HepG2 (cell line): ENCODE measurements at regions of chr1 and their contacts with region 1.

Region 1: GRCh38 chr1:219317762-219318353 is 144.2 kb downstream of the LYPLAL1 start:
- DNase-seq: peak; percentile 83
- ATAC-seq: peak; percentile 100
- H3K4me3 ChIP-seq: no peak overlapping the region
- H3K27ac ChIP-seq: peak overlapping the region; percentile 21
- H3K4me1 ChIP-seq: peaks cover 39% of the 10 kb centered on the region
- H3K27me3 ChIP-seq: no peaks in the 10 kb centered on the region
- CTCF ChIP-seq: peak; percentile 93
- EP300 ChIP-seq: 0 out of 4 replicates have a peak, but pooled peaks of 1 of the 2 experiments have one; percentile 25
- POLR2A ChIP-seq: no peak
- RAD21 ChIP-seq: peak; percentile 89

Region 2: GRCh38 chr1:218996362-218996761 is 321.5 kb before region 1 on chr1:
- CTCF ChIA-PET with region 1: no interaction called
- POLR2A ChIA-PET with region 1: no interaction called
- in situ Hi-C with region 1: no loop called
- intact Hi-C with region 1: loop called (anchors 10 kb)
- DNase-seq: no peak
- ATAC-seq: no peak
- H3K4me3 ChIP-seq: no peak overlapping the region
- H3K27ac ChIP-seq: no peak overlapping the region
- H3K4me1 ChIP-seq: no peaks in the 10 kb centered on the region
- H3K27me3 ChIP-seq: no peaks in the 10 kb centered on the region
- CTCF ChIP-seq: no peak
- EP300 ChIP-seq: no peak
- POLR2A ChIP-seq: no peak
- RAD21 ChIP-seq: no peak

Region 3: DNA sequence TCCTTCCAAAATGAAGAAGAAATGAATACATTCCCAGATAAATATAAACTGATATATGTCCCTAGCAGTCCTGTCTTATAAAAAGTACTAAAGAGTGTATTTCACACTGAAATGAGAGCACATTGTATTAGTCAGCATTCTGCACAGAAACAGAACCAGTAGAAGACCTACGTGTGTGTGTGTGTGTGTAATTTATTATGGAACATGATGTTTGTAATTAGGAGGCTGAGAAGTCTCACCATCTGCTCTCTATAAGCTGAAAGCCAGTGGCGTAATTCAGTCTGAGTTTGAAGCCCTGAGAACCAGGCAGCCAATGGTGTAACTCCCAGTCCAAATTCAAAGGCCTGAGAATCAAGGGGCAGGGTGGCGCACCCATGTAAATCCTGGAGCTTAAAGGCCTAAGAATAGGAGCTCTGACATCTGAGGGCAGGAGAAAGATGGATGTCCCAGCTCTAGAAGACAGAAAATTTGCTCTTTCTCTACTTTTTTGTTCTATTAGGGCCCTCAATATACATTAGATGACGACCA is 290.6 kb before region 1 on chr1:
- CTCF ChIA-PET with region 1: no interaction called
- POLR2A ChIA-PET with region 1: no interaction called
- in situ Hi-C with region 1: no loop called
- intact Hi-C with region 1: no loop called
- DNase-seq: no peak
- ATAC-seq: no peak
- H3K4me3 ChIP-seq: no peak overlapping the region
- H3K27ac ChIP-seq: no peak overlapping the region
- H3K4me1 ChIP-seq: no peaks in the 10 kb centered on the region
- H3K27me3 ChIP-seq: no peaks in the 10 kb centered on the region
- CTCF ChIP-seq: no peak
- EP300 ChIP-seq: no peak
- POLR2A ChIP-seq: no peak
- RAD21 ChIP-seq: no peak

Region 4: DNA sequence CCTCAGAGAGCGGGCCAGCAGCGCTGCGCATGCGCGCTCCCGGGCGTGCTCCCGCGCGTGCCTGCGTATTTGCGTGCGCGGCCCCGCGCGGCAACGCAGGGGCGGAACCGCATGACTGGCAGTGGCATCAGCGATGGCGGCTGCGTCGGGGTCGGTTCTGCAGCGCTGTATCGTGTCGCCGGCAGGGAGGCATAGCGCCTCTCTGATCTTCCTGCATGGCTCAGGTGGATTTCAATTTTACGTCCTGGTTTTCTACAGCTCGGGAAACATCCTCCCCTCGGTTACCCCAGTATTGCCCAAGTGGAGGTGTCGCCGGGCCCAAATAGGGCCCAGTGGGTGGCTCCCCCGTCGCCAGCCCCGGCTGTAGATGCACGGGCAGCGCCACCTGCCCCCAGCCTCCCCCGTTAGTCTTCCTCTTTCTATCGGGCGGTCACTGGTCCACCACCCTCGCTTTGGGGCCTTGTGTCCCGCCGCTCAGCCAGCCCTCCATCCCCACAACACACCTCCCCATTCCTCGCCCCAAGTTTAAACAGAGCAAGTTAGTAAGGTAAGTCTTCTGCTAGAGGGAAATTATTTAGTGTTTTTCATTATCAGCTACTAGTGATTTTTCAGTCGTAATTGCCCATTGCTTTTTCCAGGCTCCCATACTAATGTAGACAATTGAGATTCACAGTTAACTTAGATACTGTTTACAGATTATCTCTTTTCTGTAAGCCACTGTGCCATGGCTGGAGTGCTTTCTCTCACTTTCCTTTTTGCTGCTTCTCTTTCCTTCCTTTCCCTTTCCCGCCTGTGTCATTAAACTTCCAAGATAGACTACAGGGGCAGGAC is 143.9 kb before region 1 on chr1 and contains the start of gene LYPLAL1:
- CTCF ChIA-PET with region 1: no interaction called
- POLR2A ChIA-PET with region 1: interaction called, 8 read pairs
- in situ Hi-C with region 1: loop called (anchors 10 kb)
- intact Hi-C with region 1: loop called (anchors 10 kb)
- DNase-seq: peak; percentile 74
- ATAC-seq: peak; percentile 95
- H3K4me3 ChIP-seq: peak within 1 kb of the TSS; percentile 79 to 88 (median 84)
- H3K27ac ChIP-seq: peak within 1 kb of the TSS; percentile 81
- H3K4me1 ChIP-seq: peaks cover 71% of the 10 kb centered on the region
- H3K27me3 ChIP-seq: no peaks in the 10 kb centered on the region; a peak in 1 of 5 replicates
- CTCF ChIP-seq: peak; percentile 39
- EP300 ChIP-seq: no peak
- POLR2A ChIP-seq: peak; percentile 91 to 97
- RAD21 ChIP-seq: no peak
- total RNA-seq, gene LYPLAL1: 29.1 and 31.6 TPM in 2 replicates

Region 5: GRCh38 chr1:219209578-219209977 is 108.3 kb before region 1 on chr1:
- CTCF ChIA-PET with region 1: interaction called, 18 read pairs
- POLR2A ChIA-PET with region 1: no interaction called
- in situ Hi-C with region 1: loop called (anchors 10 kb)
- intact Hi-C with region 1: loop called (anchors 1 kb)
- DNase-seq: no peak
- ATAC-seq: no peak
- H3K4me3 ChIP-seq: no peak overlapping the region
- H3K27ac ChIP-seq: no peak overlapping the region
- H3K4me1 ChIP-seq: peaks cover 24% of the 10 kb centered on the region
- H3K27me3 ChIP-seq: no peaks in the 10 kb centered on the region
- CTCF ChIP-seq: no peak
- EP300 ChIP-seq: no peak
- POLR2A ChIP-seq: no peak
- RAD21 ChIP-seq: no peak

Region 6: GRCh38 chr1:219385786-219386427 is 68.0 kb after region 1 on chr1:
- CTCF ChIA-PET with region 1: no interaction called
- POLR2A ChIA-PET with region 1: interaction called, 4 read pairs
- in situ Hi-C with region 1: no loop called
- intact Hi-C with region 1: loop called (anchors 2 kb)
- DNase-seq: peak; percentile 69
- ATAC-seq: peak; percentile 98
- H3K4me3 ChIP-seq: no peak overlapping the region
- H3K27ac ChIP-seq: no peak overlapping the region
- H3K4me1 ChIP-seq: peaks cover 32% of the 10 kb centered on the region
- H3K27me3 ChIP-seq: no peaks in the 10 kb centered on the region
- CTCF ChIP-seq: peak; percentile 89
- EP300 ChIP-seq: no peak
- POLR2A ChIP-seq: no peak
- RAD21 ChIP-seq: peak; percentile 88

Region 7: GRCh38 chr1:219416594-219417238 is 98.9 kb after region 1 on chr1:
- CTCF ChIA-PET with region 1: no interaction called
- POLR2A ChIA-PET with region 1: no interaction called
- in situ Hi-C with region 1: no loop called
- intact Hi-C with region 1: loop called (anchors 10 kb)
- DNase-seq: peak; percentile 47
- ATAC-seq: peak; percentile 93
- H3K4me3 ChIP-seq: no peak overlapping the region
- H3K27ac ChIP-seq: no peak overlapping the region
- H3K4me1 ChIP-seq: peaks cover 40% of the 10 kb centered on the region
- H3K27me3 ChIP-seq: no peaks in the 10 kb centered on the region
- CTCF ChIP-seq: peak; percentile 69
- EP300 ChIP-seq: no peak
- POLR2A ChIP-seq: no peak
- RAD21 ChIP-seq: peak; percentile 32; the same call in 1 of the 2 replicates

Region 8: DNA sequence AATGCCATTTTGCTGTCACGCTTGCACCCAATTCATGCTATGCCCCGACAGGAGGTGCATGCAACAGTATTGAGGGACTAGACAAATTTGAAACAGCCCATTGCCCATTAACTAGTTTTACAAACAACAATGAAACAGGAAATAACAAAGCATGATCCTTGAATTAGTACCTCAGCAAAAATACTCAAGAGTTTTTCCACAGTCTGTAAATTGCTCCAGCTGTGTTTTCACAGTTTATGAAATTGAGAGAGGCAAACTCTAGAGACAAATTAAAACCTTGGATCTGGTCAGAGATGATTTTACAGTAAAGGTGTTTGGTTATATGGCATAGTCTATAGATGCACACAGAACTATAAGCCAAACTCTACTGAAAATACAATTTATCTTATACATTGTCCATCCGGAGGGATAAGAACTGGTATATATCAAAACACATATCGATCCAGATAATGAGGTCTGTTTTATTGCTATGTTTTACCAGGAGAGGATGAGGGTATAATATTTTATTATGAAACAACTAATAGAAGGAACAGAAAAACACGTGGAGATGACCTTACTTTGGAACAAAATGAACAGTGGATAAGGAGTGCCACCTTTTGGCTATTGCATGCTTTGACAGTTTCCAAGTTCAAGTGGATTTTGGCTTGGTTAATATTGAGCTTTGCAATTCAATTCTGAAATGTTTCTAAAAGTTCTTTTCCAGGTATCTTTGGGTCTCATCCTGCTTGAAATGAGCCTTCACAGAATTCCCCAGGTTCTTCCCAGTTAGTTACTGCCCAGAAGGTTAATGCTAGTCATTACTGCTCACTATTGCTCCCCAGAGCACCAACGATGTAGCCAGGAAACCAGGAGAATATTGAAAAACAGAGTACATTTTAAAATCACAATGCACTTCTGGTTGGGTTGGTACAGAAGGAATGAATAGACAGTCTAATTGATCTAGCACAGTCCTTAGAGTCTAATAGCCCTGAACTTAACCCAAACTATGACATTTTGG is 249.4 kb after region 1 on chr1:
- CTCF ChIA-PET with region 1: no interaction called
- POLR2A ChIA-PET with region 1: no interaction called
- in situ Hi-C with region 1: no loop called
- intact Hi-C with region 1: loop called (anchors 10 kb)
- DNase-seq: peak; percentile 20
- ATAC-seq: peak; percentile 57; the same call in 2 of the 3 replicates
- H3K4me3 ChIP-seq: no peak overlapping the region
- H3K27ac ChIP-seq: no peak overlapping the region
- H3K4me1 ChIP-seq: peaks cover 15% of the 10 kb centered on the region
- H3K27me3 ChIP-seq: no peaks in the 10 kb centered on the region; a peak in 1 of 5 replicates
- CTCF ChIP-seq: peak; percentile 64
- EP300 ChIP-seq: no peak
- POLR2A ChIP-seq: no peak
- RAD21 ChIP-seq: no peak